Naive thymus-derived CD8-positive, alpha-beta T cell (primary cell): ENCODE measurements at regions of chr17 and their contacts with region 1.

Region 1: GRCh38 chr17:48037036-48037837 is at the start of gene COPZ2:
- DNase-seq: peak; percentile 51 to 83 (median 62)
- ATAC-seq: peak; percentile 95 to 97
- H3K4me3 Mint-ChIP-seq: peak within 1 kb of the TSS; percentile 81 to 95 (median 90)
- H3K27ac Mint-ChIP-seq: peak within 1 kb of the TSS in 6 of 10 donors; percentile 19 to 87 (median 68)
- H3K4me1 Mint-ChIP-seq: peaks cover 2 to 12% (median 7%) of the 10 kb centered on the region in 4 donors
- H3K27me3 Mint-ChIP-seq: peaks cover 13 to 25% (median 22%) of the 10 kb centered on the region in 5 donors
- polyA plus RNA-seq, gene COPZ2: 0.84 to 7.1 (median 1.6) TPM

Region 2: DNA sequence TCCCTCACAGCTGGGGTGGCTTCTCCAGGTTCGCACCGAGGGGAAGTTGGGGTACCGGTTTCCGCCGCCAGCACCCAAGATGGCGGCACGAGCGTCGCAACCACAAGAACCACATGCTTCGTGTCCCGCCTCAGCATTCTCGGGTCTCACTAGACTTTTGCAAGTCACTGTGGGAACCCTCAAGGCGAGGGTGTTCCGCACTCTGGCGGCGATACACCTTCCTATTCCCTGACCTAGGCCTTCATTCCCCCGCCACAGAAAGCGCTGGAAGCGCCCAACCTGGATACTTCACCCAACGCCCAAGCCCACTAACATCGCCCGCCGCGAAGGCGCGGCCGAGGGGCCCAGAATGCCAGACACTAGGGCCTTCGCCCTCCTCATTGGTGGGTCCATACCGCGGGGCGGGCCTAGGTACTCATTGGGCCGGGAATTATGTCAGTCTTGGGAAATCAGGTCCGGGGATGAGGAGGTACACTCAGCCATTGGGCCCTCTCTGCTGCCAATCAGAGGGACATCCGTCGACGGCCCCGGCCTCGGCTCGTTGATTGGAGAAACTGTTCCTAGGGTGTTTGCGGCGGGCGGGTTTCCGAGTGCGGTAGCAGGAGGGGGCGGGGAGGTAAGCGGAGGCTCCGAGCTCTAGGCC is 10.6 kb after region 1 on chr17 and contains the start of gene NFE2L1:
- POLR2A ChIA-PET with region 1: interaction called, 23 read pairs
- DNase-seq: peak; percentile 91 to 99 (median 98)
- ATAC-seq: peak; percentile 95 to 96
- H3K4me3 Mint-ChIP-seq: peak within 1 kb of the TSS; percentile 80 to 100 (median 98)
- H3K27ac Mint-ChIP-seq: peak within 1 kb of the TSS; percentile 93 to 100 (median 99)
- H3K4me1 Mint-ChIP-seq: peaks cover 23 to 63% (median 59%) of the 10 kb centered on the region in 4 donors
- H3K27me3 Mint-ChIP-seq: no peaks in the 10 kb centered on the region
- polyA plus RNA-seq, gene NFE2L1: 5.0 to 14.2 (median 7.2) TPM